Adrenal gland (tissue), 19 donors: ENCODE measurements at regions of chr3 and their contacts with region 1.

Region 1: DNA sequence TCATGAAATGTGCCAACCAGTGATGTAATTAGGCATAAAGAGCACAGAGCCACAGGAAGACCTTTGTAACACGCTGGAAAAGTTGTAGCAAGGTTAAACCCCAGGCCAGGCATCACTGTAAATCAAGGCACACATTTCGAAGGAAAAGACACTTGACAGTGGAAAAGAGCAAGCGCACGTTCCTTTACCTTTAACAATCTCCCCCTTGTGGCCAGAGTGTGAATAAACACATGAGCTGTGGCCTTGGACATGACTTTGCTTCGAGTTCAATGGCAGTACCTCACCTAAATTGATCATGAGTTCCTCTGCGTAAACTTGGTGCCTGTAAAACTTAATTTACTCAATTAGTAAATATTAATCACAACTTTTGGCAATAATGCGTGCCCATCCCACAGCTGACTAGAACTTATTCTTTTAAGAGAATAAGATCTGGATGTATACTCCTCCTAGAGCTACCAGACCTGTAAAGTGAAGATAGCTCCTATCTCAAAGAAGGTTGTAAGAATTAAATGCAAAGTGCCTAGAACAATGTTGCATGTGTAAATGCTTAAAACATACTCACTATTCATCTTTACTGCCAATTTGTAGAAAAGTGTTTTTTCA is 757.0 kb upstream of the NECTIN3 start:
- DNase-seq: peak; percentile 34 to 77 (median 50)
- H3K4me3 ChIP-seq: no peak overlapping the region
- H3K27ac ChIP-seq: no peak overlapping the region
- H3K4me1 ChIP-seq: no peaks in the 10 kb centered on the region
- H3K27me3 ChIP-seq: no peaks in the 10 kb centered on the region
- CTCF ChIP-seq: peak; percentile 39 to 70 (median 59)
- POLR2A ChIP-seq: no peak

Region 2: GRCh38 chr3:109275702-109276293 is 1038.8 kb before region 1 on chr3:
- intact Hi-C with region 1: loop called in 1 of 2 experiments (anchors 10 kb)
- DNase-seq: peak in 6 of 7 donors; percentile 21 to 61 (median 31)
- H3K4me3 ChIP-seq: no peak overlapping the region
- H3K27ac ChIP-seq: no peak overlapping the region
- H3K4me1 ChIP-seq: no peaks in the 10 kb centered on the region
- H3K27me3 ChIP-seq: no peaks in the 10 kb centered on the region
- CTCF ChIP-seq: peak; percentile 10 to 56 (median 53)
- POLR2A ChIP-seq: no peak